ENCODE measurements at regions of chr11 and their contacts with region 1.

Region 1: DNA sequence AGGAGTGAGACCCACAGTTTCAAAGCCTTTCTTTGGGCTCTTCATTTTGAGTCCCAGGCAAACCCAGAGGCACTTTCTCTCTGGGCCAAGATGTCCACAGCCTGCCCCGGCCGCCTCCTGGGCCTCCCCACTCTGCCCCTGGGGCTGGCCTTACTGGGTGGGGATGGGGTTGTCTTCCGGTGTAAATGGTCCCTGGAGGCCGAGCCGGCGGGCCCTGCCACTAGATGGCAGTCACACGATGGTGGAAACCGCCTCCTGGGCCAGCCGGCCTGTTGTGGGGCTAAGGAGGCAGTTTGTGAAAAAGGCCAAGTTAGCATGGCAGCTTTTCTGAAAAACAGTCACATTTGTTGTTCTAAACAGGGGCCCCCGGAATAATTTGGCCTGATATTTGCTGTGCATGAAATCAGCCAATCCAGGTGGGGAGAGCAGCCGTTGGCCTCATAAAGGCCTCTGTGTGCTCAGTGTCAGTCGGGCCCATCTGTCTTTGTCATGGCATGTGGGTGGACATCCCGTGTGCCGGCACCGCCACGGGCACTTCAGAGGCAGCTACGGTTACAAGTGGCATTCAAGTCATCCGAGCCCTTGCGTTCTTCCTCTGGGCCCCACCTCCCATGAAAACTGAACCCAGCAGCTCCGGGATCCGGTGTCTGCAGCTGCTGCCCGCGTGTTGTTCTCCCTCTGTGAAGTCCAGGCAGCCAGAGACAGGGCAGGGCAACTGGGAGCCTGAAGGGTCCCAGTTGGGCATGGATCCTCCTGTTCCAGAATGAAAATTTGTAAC is 6.5 kb downstream of the MRPL23 start:
- DNase-seq: peak in 2 of 3 donors; percentile 17 to 28
- H3K4me3 ChIP-seq: no peak overlapping the region
- H3K27ac ChIP-seq: no peak overlapping the region
- H3K4me1 ChIP-seq: no peaks in the 10 kb centered on the region
- H3K27me3 ChIP-seq: no peaks in the 10 kb centered on the region

Region 2: DNA sequence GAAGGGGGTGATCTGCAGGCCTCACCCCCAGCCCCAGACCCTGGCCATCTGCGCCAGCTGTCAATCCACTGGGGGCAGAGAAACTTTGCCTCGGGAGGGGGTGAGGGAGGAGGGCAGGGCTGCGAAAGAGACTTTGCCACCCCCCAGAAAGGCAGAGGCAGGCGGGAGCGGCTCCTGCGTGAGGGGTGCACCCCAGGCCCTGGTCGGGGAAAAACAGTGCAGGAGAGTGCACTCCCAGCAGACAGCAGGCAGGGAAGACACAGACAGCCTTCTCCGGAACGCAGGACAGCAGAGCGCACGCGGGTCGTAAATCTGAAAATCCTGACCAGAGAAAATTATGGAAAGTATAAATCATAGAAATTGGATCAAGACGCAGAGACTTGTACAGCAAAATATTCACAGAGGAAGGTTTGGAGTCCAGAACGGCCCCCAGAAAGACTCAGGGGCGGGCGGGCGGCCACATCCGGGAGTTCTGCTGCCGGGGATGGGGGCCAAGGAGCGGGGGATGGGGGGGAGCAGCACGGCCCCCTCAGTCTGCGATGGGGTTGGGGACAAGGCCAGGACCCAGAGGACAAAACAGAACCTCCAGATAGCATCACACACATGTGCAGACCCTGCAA is 14.6 kb before region 1 on chr11:
- CTCF ChIA-PET with region 1: no interaction called
- POLR2A ChIA-PET with region 1: no interaction called
- DNase-seq: peak; percentile 32 to 84 (median 66)
- H3K4me3 ChIP-seq: peak overlapping the region in 1 of 7 experiments; percentile 20
- H3K27ac ChIP-seq: no peak overlapping the region
- H3K4me1 ChIP-seq: peaks cover 0 to 42% (median 31%) of the 10 kb centered on the region in 4 experiments
- H3K27me3 ChIP-seq: no peaks in the 10 kb centered on the region

Region 3: GRCh38 chr11:1968454-1969002 is 14.8 kb after region 1 on chr11:
- CTCF ChIA-PET with region 1: interaction called, 16 read pairs
- POLR2A ChIA-PET with region 1: no interaction called
- DNase-seq: no peak
- H3K4me3 ChIP-seq: no peak overlapping the region
- H3K27ac ChIP-seq: no peak overlapping the region
- H3K4me1 ChIP-seq: no peaks in the 10 kb centered on the region
- H3K27me3 ChIP-seq: no peaks in the 10 kb centered on the region

Measured in common myeloid progenitor, CD34-positive (primary cell).